A673 (cell line): ENCODE measurements at regions of chr19 and their contacts with region 1.

Region 1: DNA sequence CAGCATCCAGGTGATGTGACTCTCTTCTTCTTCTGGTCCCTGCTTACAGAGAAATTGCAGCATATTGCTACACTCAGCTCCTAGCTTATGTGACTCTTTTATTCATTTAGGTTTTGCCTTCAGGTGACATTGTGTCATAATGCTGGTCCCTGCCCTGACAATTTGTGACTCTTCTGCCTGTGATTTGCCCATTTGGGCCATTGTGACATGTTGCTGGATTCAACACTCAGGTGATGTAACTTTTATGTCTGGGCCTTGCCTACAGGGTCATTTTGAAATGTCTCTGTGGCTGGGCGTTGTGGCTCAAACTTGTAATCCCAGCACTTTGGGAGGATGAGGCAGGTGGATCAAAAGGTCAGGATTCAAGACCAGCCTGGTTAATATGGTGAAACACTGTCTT is 15.6 kb upstream of the ZNF726 start:
- DNase-seq: no peak
- H3K4me3 ChIP-seq: no peak overlapping the region
- H3K27ac ChIP-seq: no peak overlapping the region
- H3K4me1 ChIP-seq: no peaks in the 10 kb centered on the region
- H3K27me3 ChIP-seq: no peaks in the 10 kb centered on the region
- CTCF ChIP-seq: no peak

Region 2: DNA sequence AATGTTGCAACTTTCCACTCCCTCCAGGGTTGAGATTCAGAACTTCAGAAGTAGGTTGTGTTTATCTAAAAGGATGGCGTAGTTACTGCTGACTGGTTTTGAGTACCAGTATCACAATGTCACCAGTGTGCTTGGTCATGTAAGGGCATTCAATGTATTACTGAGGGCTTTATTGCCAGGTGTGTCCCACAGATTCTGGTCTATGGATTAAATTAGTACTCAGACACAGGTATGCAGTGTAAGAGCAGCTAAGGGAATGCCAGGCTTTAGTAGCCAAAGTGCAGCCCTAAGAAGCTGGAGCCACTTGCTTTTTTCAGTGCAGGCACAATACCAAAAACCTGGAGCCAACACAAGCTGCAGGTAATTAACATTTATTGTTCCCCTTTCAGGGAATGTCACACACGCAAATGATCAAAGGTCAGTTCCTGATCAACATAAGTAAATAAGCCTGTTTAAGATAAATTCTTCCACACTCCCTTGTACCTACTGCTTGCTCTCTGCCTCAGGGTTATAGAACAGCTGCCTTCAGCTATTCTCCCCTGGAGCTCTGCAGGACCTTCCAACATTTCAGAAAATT is 373.8 kb before region 1 on chr19:
- CTCF ChIA-PET with region 1: no interaction called
- POLR2A ChIA-PET with region 1: no interaction called
- intact Hi-C with region 1: no loop called
- DNase-seq: no peak
- H3K4me3 ChIP-seq: no peak overlapping the region
- H3K27ac ChIP-seq: no peak overlapping the region
- H3K4me1 ChIP-seq: no peaks in the 10 kb centered on the region
- H3K27me3 ChIP-seq: no peaks in the 10 kb centered on the region
- CTCF ChIP-seq: no peak

Region 3: GRCh38 chr19:23925285-23925684 is 26.2 kb after region 1 on chr19:
- CTCF ChIA-PET with region 1: no interaction called
- POLR2A ChIA-PET with region 1: no interaction called
- intact Hi-C with region 1: loop called (anchors 1 kb)
- DNase-seq: no peak
- H3K4me3 ChIP-seq: no peak overlapping the region
- H3K27ac ChIP-seq: no peak overlapping the region
- H3K4me1 ChIP-seq: no peaks in the 10 kb centered on the region
- H3K27me3 ChIP-seq: no peaks in the 10 kb centered on the region
- CTCF ChIP-seq: no peak